MCF 10A (cell line): ENCODE measurements at regions of chrX and their contacts with region 1.

Region 1: GRCh38 chrX:23554304-23554703 is 113.0 kb upstream of the PRDX4 start:
- DNase-seq: peak; percentile 52
- H3K4me3 Mint-ChIP-seq: no peak overlapping the region
- H3K27ac Mint-ChIP-seq: no peak overlapping the region
- H3K4me1 Mint-ChIP-seq: no peaks in the 10 kb centered on the region
- H3K27me3 Mint-ChIP-seq: peaks cover 61% of the 10 kb centered on the region
- CTCF ChIP-seq: peak; percentile 63

Region 2: DNA sequence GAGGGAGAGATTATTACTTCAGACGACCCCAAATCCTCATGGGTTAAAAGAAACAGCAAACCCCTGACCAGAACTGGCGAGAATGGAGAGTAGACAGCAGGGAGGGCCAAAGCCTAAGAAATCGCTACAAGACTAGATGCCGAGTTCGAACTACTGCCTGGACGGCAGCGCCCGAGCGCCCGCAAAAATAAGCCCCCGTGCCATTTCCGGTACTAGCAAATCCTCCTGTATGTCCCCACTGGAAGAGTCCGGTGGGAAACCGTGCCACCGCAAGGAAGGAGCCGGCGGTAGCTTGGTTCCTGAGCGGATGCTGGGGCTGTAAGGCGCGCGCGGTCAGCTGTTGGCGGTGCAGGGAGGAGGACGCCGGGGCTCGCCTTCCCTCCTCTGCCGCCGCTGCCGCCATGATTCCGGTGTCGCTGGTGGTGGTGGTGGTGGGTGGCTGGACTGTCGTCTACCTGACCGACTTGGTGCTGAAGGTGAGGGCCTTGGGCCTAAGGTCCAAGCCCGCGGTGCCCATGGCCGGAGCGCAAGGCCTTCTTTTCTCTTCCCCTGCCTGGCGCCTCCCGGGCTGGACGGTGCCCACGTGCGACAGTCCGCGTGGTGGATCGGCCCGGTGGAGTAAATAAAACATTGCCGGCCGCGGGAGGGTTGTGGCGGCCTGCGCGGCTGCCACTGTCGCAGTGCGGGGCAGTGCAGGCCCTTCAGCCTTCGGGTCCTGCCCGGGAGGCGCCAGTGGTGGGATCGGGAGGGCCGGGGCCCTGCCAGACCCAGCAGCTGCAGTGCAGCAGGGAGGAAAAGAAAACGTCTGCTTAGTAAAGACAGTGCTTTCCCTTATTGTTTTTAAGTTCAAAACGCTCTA is 1714.7 kb before region 1 on chrX and contains the start of gene MBTPS2:
- CTCF ChIA-PET with region 1: no interaction called
- POLR2A ChIA-PET with region 1: no interaction called
- intact Hi-C with region 1: loop called (anchors 2 kb)
- DNase-seq: peak; percentile 78
- H3K4me3 Mint-ChIP-seq: peak within 1 kb of the TSS; percentile 85
- H3K27ac Mint-ChIP-seq: peak within 1 kb of the TSS; percentile 93
- H3K4me1 Mint-ChIP-seq: no peaks in the 10 kb centered on the region
- H3K27me3 Mint-ChIP-seq: peaks cover 42% of the 10 kb centered on the region
- CTCF ChIP-seq: no peak
- total RNA-seq, gene MBTPS2: 21.1 and 21.8 TPM in 2 replicates

Region 3: GRCh38 chrX:22081475-22082092 is 1472.7 kb before region 1 on chrX:
- CTCF ChIA-PET with region 1: no interaction called
- POLR2A ChIA-PET with region 1: no interaction called
- intact Hi-C with region 1: loop called (anchors 5 kb)
- DNase-seq: peak; percentile 79
- H3K4me3 Mint-ChIP-seq: no peak overlapping the region
- H3K27ac Mint-ChIP-seq: no peak overlapping the region
- H3K4me1 Mint-ChIP-seq: peaks cover 6% of the 10 kb centered on the region
- H3K27me3 Mint-ChIP-seq: peaks cover 53% of the 10 kb centered on the region
- CTCF ChIP-seq: peak; percentile 86

Region 4: DNA sequence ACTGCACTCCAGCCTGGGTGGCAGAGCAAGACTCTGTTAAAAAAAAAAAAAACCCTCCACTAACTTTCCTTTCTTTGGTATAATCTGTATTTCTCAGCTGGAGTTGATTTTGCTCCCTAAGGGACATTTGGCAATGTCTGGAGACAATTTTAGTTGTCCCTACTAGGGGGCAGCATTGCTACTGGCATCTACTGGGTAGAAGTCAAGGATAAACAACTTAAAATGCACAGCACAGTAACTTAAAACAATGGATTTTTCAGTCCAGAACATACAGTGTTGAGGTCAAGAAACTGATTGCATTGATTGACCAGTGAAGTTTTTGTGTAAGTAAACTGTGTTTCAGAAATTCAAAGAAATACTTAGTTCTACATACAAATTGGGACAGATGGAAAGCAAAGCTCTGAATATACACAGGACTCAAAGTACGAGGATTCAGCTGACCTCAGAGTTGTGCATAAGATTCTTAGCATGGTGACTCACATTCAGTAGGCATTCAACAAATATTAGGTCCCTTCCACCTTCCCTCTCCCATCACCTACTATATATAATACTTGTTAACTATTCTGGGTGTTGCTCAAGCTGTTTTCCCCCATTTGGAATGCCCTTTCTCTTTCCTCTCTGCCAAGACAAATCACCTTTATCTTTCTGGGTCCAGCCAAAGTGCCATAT is 545.7 kb before region 1 on chrX:
- CTCF ChIA-PET with region 1: interaction called, 3 read pairs
- POLR2A ChIA-PET with region 1: no interaction called
- intact Hi-C with region 1: loop called (anchors 1 kb)
- DNase-seq: peak; percentile 54
- H3K4me3 Mint-ChIP-seq: no peak overlapping the region
- H3K27ac Mint-ChIP-seq: no peak overlapping the region
- H3K4me1 Mint-ChIP-seq: peaks cover 8% of the 10 kb centered on the region
- H3K27me3 Mint-ChIP-seq: peaks cover 28% of the 10 kb centered on the region
- CTCF ChIP-seq: peak; percentile 37

Region 5: GRCh38 chrX:23317799-23318724 is 236.2 kb before region 1 on chrX:
- CTCF ChIA-PET with region 1: no interaction called
- POLR2A ChIA-PET with region 1: no interaction called
- intact Hi-C with region 1: loop called (anchors 2 kb)
- DNase-seq: peak; percentile 44
- H3K4me3 Mint-ChIP-seq: no peak overlapping the region
- H3K27ac Mint-ChIP-seq: no peak overlapping the region
- H3K4me1 Mint-ChIP-seq: no peaks in the 10 kb centered on the region
- H3K27me3 Mint-ChIP-seq: peaks cover 70% of the 10 kb centered on the region
- CTCF ChIP-seq: peak; percentile 94

Region 6: GRCh38 chrX:23403853-23404252 is 150.5 kb before region 1 on chrX:
- CTCF ChIA-PET with region 1: no interaction called
- POLR2A ChIA-PET with region 1: no interaction called
- intact Hi-C with region 1: loop called (anchors 5 kb)
- DNase-seq: peak; percentile 10
- H3K4me3 Mint-ChIP-seq: no peak overlapping the region
- H3K27ac Mint-ChIP-seq: no peak overlapping the region
- H3K4me1 Mint-ChIP-seq: peaks cover 3% of the 10 kb centered on the region
- H3K27me3 Mint-ChIP-seq: peaks cover 46% of the 10 kb centered on the region
- CTCF ChIP-seq: peak; percentile 14

Region 7: GRCh38 chrX:24054182-24055042 is 500.1 kb after region 1 on chrX and contains the start of gene EIF2S3:
- CTCF ChIA-PET with region 1: no interaction called
- POLR2A ChIA-PET with region 1: no interaction called
- intact Hi-C with region 1: no loop called
- DNase-seq: peak; percentile 98
- H3K4me3 Mint-ChIP-seq: no peak within 1 kb of the TSS
- H3K27ac Mint-ChIP-seq: peak within 1 kb of the TSS; percentile 99
- H3K4me1 Mint-ChIP-seq: no peaks in the 10 kb centered on the region
- H3K27me3 Mint-ChIP-seq: peaks cover 10% of the 10 kb centered on the region
- CTCF ChIP-seq: peak; percentile 50
- total RNA-seq, gene EIF2S3: 354 and 391 TPM in 2 replicates